PC-3 (cell line): ENCODE measurements at regions of chrX and their contacts with region 1.

Region 1: DNA sequence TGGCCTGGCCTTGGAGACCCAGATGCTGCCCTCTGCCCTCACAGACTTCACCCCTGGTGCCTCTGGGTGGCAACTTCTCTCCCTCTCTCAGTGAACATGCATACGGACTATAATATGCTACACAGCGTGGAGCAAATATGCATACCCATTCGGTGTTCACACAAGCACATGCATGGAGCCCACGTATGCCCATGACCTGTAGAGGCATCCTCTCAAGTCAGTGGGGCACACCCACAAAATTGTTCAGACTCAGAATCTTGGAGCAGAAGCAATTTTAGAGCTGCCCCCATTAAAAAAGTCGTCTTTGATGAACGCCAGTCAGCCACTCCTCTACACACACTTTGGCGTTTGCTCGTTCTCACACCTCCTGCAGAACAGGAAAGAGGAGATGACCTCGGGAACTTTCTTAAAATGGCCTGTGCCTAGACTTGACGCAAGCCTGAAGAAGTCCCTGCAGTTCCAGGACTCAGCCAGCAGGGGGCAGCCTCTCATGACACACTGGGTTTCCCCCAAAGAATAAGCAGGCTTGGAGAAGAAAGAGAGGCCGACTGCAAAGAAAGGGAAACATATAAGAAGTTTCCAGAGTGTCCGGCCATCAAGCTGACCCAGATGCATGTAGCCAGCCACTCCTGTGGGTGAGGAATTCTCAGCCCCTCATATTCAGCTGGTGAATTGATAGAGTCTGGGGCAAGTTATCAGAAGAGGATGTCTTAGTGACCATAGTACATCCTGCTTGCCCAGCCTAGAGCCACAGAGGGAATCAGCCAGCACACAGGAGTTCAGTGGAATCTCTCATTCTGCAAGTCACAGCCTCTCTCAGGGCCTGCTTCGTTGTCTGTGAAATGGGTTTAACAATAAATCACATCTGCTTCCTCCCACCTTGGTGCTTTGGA is 17.3 kb downstream of the APLN start:
- DNase-seq: peak; percentile 75
- ATAC-seq: peak; percentile 79
- H3K4me3 ChIP-seq: no peak overlapping the region
- H3K27ac ChIP-seq: no peak overlapping the region
- H3K4me1 ChIP-seq: no peaks in the 10 kb centered on the region
- H3K27me3 ChIP-seq: no peaks in the 10 kb centered on the region
- CTCF ChIP-seq: peak; percentile 88

Region 2: GRCh38 chrX:129726307-129727111 is 89.0 kb after region 1 on chrX:
- CTCF ChIA-PET with region 1: interaction called, 11 read pairs
- POLR2A ChIA-PET with region 1: no interaction called
- intact Hi-C with region 1: loop called (anchors 1 kb)
- DNase-seq: peak; percentile 82
- ATAC-seq: peak; percentile 88
- H3K4me3 ChIP-seq: no peak overlapping the region
- H3K27ac ChIP-seq: no peak overlapping the region
- H3K4me1 ChIP-seq: peaks cover 13% of the 10 kb centered on the region; the same call in 1 of the 2 replicates
- H3K27me3 ChIP-seq: no peaks in the 10 kb centered on the region
- CTCF ChIP-seq: peak; percentile 86

Region 3: DNA sequence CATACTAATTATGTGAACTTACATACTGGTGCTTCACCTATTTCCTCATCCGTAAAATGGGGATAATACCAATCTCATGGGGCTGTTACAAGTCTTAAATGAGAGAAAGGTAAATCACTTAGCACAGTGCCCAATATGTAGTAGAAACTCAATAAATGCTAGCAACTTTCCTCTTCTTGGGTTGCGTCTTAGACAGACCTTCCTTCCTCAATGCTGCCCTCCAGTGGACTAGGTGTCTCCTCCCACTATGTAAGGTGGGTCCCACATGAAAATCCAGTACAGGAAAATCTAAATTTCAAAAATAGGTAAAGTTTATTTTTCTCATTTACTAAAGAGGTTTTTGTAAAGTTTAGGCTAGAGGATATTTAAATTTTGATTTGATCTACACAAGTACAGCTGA is 185.7 kb after region 1 on chrX:
- CTCF ChIA-PET with region 1: no interaction called
- POLR2A ChIA-PET with region 1: no interaction called
- intact Hi-C with region 1: loop called (anchors 10 kb)
- DNase-seq: peak; percentile 61
- ATAC-seq: peak; percentile 68; the same call in 1 of the 2 replicates
- H3K4me3 ChIP-seq: no peak overlapping the region
- H3K27ac ChIP-seq: no peak overlapping the region
- H3K4me1 ChIP-seq: no peaks in the 10 kb centered on the region
- H3K27me3 ChIP-seq: no peaks in the 10 kb centered on the region
- CTCF ChIP-seq: peak; percentile 72